HEK293T (cell line): ENCODE measurements at regions of chr9 and their contacts with region 1.

Region 1: DNA sequence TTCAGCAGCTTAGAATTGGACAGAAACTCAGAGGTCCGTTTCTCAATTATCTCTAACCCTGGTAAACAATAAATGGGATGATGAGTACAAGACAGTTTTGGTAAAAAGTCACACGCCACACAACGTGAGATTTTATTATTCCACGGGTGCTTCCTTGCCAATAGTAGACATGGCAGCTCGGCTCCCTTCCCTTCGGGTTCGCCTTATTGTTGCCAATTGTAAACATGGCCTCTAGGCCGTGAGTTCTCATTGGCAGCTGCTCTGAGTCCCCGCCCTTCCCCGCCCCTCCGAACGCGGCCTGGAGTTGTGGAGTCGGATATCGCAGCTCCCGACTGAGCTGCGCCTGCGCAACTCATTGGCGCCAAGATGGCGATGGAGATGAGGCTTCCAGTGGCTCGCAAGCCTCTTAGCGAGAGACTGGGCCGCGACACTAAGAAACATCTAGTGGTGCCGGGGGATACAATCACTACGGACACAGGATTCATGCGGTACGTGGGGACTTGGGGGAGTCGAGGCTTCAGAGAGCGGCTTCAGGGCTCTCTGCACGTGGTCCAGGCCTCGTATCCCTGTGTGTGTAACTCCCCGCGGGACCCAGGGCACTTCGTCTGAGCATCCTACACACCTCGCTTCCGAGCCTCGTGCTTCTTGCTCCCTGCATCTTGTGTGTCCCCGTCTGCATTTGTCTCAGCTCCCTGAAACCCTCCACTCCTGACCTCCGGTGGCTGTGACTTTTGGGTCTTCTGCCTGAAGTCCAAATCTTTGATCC is at the start of gene EXOSC2:
- DNase-seq: peak; percentile 96

Region 2: DNA sequence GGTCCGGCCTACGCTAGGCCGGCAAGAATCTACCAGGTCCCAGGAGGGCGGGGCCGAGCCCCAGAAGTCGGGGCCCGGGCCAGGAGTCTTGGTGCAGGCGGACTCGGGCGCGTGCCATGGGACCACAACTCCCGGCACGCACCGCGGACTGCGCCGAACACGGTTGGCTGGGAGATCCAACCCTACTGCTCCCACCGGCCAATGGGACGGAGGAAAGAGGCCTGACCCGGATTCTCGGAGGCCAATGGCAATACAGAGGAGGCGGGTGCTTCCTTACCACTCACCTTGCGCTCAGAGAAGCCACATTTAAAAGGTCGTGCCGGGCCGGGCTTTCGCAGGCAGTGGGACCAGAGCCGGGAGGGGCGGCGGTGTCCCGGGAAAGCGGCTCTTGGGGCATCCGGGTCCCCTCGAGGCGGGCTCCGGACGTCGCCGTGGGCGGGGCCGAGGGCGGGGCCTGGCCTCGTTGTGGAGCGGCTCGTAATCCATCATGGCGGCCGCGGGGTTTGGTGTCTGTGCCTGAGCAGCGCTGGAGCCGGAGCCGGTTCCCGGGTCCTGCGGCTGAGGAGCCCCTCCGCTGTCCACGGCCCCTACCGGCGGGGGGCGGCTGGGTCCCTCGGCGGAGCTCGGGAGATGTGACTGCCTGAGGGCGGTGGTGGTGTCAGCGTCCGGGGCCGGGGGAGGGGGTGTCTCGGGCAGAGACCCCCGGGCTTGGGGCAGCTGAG is 19.1 kb after region 1 on chr9:
- CTCF ChIA-PET with region 1: no interaction called
- POLR2A ChIA-PET with region 1: interaction called, 15 read pairs
- DNase-seq: peak; percentile 90